Activated CD4-positive, alpha-beta memory T cell treated with anti-CD3 and anti-CD28 coated beads for 36 hours (primary cell): ENCODE measurements at regions of chr6 and their contacts with region 1.

Region 1: DNA sequence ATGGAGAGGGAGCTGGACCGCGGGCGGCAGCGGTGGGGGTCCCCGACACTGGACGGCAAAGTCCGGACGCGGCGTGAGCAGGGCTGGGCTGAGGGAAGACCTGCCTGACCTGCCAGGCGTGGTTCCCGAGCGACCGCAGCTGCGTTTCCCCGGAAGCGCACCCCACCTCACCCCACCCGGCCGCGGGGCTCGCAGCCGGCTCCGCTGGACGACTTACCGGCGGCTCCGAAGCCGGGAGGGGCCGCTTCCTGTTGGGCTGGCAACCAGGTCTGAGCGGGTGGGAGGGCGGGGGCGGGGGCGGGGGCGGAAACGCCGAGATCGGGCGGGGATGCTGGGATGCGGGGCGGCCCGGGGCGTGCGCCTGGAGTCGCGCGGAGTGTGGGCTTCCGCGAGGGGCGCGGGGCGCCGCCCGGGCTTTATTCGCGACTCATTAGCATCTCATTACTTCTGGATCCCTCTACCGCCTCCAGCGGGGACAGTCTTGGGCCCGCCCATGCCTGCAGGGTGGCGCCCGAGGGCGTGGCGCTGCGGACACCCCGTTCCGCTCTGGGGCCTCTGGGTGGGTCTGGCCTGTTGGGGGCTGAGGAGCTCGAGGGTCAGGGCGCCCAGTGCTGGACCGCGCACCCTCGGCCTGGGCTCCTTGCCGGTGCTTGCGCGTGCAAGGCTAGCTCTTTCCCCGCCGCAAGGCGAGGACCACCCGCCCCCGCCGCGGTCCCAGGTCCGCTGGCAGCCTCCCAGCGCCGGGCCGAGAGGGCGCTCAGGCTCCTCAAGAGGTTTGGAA is at the start of gene MICAL1:
- DNase-seq: peak; percentile 78
- H3K4me3 Mint-ChIP-seq: peak within 1 kb of the TSS; percentile 93
- H3K27ac Mint-ChIP-seq: peak within 1 kb of the TSS; percentile 90
- H3K4me1 Mint-ChIP-seq: peaks cover 65% of the 10 kb centered on the region
- H3K27me3 Mint-ChIP-seq: no peaks in the 10 kb centered on the region
- total RNA-seq, gene MICAL1: 39.4 to 45.0 TPM

Region 2: GRCh38 chr6:108558372-108559096 is 897.2 kb before region 1 on chr6:
- CTCF ChIA-PET with region 1: no interaction called
- POLR2A ChIA-PET with region 1: no interaction called
- intact Hi-C with region 1: loop called (anchors 5 kb)
- DNase-seq: peak; percentile 97
- H3K4me3 Mint-ChIP-seq: peak overlapping the region; percentile 93
- H3K27ac Mint-ChIP-seq: peak overlapping the region; percentile 96
- H3K4me1 Mint-ChIP-seq: peaks cover 25% of the 10 kb centered on the region
- H3K27me3 Mint-ChIP-seq: no peaks in the 10 kb centered on the region

Region 3: DNA sequence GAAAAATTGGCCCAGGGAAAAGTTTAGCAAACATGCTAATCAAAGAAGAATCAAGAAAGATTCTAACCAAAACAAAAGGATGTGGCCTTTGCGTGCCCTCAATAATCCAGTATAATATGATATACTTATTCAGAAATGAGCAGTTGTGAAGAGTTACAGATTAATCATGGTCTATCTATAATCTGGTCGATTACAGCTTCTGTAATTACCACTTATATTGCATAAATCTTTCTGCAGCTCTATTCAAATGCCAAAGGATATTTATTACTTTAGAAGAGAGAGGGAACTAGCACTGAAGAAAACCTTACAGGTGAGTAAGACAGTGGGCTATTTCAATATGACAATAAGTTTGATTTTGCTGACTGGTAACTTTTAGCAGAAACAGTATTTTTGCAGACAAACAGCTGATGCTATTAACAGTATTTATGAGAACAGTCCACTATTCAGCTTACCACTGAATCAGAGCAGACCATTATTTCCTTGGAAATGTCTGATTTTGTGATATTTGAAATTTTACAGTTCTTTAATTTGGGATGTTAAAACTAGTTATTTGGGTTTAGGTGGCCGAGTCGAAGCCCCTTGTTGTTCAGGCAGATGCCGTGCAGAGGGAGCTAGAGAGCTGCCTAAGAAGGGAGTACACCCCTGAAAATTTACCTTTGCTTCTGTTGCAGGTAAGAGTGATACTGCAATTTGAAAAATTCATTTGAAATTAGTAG is 268.1 kb before region 1 on chr6:
- CTCF ChIA-PET with region 1: interaction called, 4 read pairs
- POLR2A ChIA-PET with region 1: no interaction called
- intact Hi-C with region 1: loop called (anchors 5 kb)
- DNase-seq: peak; percentile 69
- H3K4me3 Mint-ChIP-seq: no peak overlapping the region
- H3K27ac Mint-ChIP-seq: no peak overlapping the region
- H3K4me1 Mint-ChIP-seq: peaks cover 2% of the 10 kb centered on the region
- H3K27me3 Mint-ChIP-seq: peaks cover 19% of the 10 kb centered on the region

Region 4: DNA sequence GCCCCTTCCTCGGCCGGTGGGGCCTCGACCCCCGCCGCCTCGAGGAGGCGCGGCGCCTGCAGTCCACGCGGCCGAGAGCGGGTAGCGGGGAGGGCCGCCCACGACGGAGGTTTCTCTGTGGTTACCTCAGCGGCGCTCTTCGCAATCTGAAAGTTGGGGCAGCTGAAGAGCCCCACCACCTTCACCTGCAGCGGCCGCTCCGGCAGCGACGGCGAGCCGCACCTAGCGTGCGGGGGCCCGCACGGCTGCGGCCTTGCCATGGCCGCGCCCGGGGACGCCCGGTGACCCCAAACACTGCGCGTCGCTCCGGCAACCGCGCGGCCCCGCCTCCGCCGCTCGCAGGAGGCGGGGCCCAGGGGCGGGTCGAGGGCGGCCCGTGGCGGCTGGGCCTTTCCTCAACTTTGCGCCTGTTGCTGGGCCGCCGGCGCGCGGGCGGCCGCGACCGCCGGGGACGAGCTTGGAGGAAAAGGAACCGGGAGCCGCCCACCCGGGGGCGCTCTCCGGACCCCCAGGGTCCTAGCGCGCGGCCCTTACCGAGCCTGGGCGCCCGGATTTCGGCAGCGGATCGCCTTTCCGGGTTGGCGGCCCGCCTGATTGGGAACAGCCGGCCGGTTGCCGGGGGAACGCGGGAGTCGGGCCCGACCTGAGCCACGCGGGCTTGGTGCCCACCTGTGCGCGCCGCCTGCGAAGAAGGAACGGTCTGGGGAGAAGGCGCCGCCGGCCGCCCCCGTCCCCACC is 15.2 kb before region 1 on chr6 and contains the starts of genes PPIL6 and SMPD2:
- CTCF ChIA-PET with region 1: interaction called, 37 read pairs
- POLR2A ChIA-PET with region 1: interaction called, 37 read pairs
- intact Hi-C with region 1: loop called (anchors 1 kb)
- DNase-seq: peak; percentile 84
- H3K4me3 Mint-ChIP-seq: peak within 1 kb of the TSS; percentile 87
- H3K27ac Mint-ChIP-seq: peak within 1 kb of the TSS; percentile 82
- H3K4me1 Mint-ChIP-seq: peaks cover 21% of the 10 kb centered on the region
- H3K27me3 Mint-ChIP-seq: no peaks in the 10 kb centered on the region
- total RNA-seq, gene PPIL6: 0.43 to 0.46 TPM
- total RNA-seq, gene SMPD2: 9.7 TPM

Region 5: DNA sequence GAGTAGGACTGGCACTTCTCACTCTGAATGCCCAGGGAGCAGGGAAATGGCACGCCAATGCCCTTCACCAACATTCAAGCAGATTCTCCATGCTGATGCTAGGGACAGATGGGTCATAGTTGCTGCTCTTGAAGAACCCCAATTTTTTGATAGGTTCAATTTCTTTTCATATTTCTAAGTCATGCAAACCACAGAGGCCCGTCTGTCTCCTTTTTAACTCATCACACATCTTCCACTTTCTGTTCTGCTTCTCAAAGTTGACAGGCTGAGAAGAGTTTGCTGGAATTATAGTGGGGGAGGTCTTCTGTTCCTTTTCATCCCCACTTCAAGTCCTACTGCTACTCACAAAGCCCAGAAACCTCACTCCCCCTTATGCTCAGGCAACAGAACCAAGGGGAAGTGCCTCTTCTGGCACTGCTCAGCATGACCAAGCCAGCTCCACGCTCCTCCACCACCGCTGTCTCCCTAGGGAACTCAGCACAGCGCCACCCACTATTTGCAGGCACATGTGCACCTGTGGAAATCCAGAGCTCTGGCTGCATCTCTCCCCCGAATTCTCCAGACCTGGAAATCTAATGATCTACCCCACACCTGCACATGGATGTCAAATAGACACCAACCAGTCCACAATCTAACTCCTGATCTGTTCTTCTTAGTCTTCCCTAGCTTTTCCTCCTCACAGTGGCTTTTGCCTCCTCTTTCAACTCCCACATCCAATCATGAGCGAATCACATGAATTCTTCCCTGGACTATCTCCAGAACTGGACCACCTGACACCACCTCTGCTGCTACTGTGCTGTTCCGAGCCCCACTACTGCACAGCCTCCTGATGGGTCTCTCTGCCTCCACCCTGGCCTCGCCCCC is 16.7 kb after region 1 on chr6:
- CTCF ChIA-PET with region 1: no interaction called
- POLR2A ChIA-PET with region 1: interaction called, 11 read pairs
- intact Hi-C with region 1: loop called (anchors 1 kb)
- DNase-seq: no peak
- H3K4me3 Mint-ChIP-seq: no peak overlapping the region
- H3K27ac Mint-ChIP-seq: peak overlapping the region; percentile 68
- H3K4me1 Mint-ChIP-seq: peaks cover 73% of the 10 kb centered on the region
- H3K27me3 Mint-ChIP-seq: no peaks in the 10 kb centered on the region